ENCODE measurements at regions of chr15 and their contacts with region 1.

Region 1: DNA sequence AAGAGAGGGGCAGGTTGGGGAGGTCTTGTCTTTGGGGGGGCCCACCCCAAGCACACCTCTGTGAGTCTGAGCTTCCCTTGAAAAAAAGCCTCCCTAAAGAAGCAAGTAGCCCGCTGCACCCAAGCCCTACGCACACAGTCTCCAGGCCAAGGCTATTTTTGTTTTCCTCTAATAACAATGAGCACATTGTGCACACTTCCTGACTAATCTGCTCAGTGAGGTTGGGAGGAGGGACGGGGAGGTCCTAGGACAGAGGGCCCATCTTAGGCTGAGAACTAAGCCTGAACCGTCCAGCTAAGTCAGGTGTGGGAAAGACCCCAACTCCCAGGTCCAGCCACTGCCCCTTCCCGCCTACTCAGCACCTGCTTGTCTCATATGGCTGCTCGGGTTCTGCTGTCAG is 87.2 kb downstream of the HMG20A start:
- DNase-seq: no peak
- H3K4me3 ChIP-seq: no peak overlapping the region
- H3K27ac ChIP-seq: no peak overlapping the region
- H3K4me1 ChIP-seq: peaks cover 16 to 32% (median 27%) of the 10 kb centered on the region in 4 experiments
- H3K27me3 ChIP-seq: no peaks in the 10 kb centered on the region
- CTCF ChIP-seq: no peak
- EP300 ChIP-seq: no peak
- POLR2A ChIP-seq: no peak
- RAD21 ChIP-seq: no peak

Region 2: GRCh38 chr15:77186594-77187011 is 321.3 kb before region 1 on chr15:
- CTCF ChIA-PET with region 1: interaction called, 13 read pairs
- POLR2A ChIA-PET with region 1: no interaction called
- DNase-seq: no peak
- H3K4me3 ChIP-seq: no peak overlapping the region
- H3K27ac ChIP-seq: no peak overlapping the region
- H3K4me1 ChIP-seq: no peaks in the 10 kb centered on the region
- H3K27me3 ChIP-seq: no peaks in the 10 kb centered on the region
- CTCF ChIP-seq: peak in 2 of 3 experiments; percentile 42 to 65; a peak in 3 of 4 replicates
- EP300 ChIP-seq: no peak
- POLR2A ChIP-seq: no peak
- RAD21 ChIP-seq: peak; percentile 85 to 87

Region 3: GRCh38 chr15:77538027-77538451 is 30.1 kb after region 1 on chr15:
- CTCF ChIA-PET with region 1: interaction called, 28 read pairs
- POLR2A ChIA-PET with region 1: interaction called, 8 read pairs
- DNase-seq: no peak
- H3K4me3 ChIP-seq: no peak overlapping the region
- H3K27ac ChIP-seq: no peak overlapping the region
- H3K4me1 ChIP-seq: peaks cover 12 to 37% (median 16%) of the 10 kb centered on the region in 4 experiments
- H3K27me3 ChIP-seq: no peaks in the 10 kb centered on the region
- CTCF ChIP-seq: no peak
- EP300 ChIP-seq: no peak
- POLR2A ChIP-seq: no peak
- RAD21 ChIP-seq: no peak

Region 4: DNA sequence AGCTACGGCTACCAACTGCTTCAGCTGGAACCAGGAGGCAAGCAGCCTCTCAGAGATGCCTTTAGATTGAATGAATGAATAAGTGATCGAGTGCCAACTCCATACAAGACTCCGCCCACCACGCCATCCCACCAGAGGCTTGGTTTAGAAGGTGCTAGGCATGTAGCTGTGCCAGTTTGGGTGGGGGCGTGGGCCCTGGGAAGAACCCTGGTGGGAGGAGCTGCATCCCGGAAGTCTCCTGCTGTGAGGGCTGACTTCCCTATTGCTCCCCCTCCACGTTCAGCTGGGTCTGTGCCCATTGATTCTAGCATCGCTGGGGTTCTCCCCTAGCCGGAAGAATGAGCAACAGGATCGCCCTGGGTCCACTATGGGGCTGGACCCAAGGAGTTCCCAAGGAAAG is 103.9 kb after region 1 on chr15:
- CTCF ChIA-PET with region 1: no interaction called
- POLR2A ChIA-PET with region 1: no interaction called
- DNase-seq: no peak
- H3K4me3 ChIP-seq: no peak overlapping the region
- H3K27ac ChIP-seq: no peak overlapping the region
- H3K4me1 ChIP-seq: peaks cover 0 to 22% (median 12%) of the 10 kb centered on the region in 4 experiments; a peak in 6 of 7 replicates
- H3K27me3 ChIP-seq: no peaks in the 10 kb centered on the region
- CTCF ChIP-seq: no peak
- EP300 ChIP-seq: no peak
- POLR2A ChIP-seq: no peak
- RAD21 ChIP-seq: no peak

Region 5: GRCh38 chr15:77624868-77625267 is 117.0 kb after region 1 on chr15:
- CTCF ChIA-PET with region 1: no interaction called
- POLR2A ChIA-PET with region 1: no interaction called
- DNase-seq: no peak
- H3K4me3 ChIP-seq: no peak overlapping the region
- H3K27ac ChIP-seq: no peak overlapping the region
- H3K4me1 ChIP-seq: peaks cover 27 to 69% (median 50%) of the 10 kb centered on the region in 4 experiments
- H3K27me3 ChIP-seq: no peaks in the 10 kb centered on the region
- CTCF ChIP-seq: no peak
- EP300 ChIP-seq: no peak
- POLR2A ChIP-seq: no peak
- RAD21 ChIP-seq: no peak